HEK293 (cell line): ENCODE measurements at regions of chr10 and their contacts with region 1.

Region 1: DNA sequence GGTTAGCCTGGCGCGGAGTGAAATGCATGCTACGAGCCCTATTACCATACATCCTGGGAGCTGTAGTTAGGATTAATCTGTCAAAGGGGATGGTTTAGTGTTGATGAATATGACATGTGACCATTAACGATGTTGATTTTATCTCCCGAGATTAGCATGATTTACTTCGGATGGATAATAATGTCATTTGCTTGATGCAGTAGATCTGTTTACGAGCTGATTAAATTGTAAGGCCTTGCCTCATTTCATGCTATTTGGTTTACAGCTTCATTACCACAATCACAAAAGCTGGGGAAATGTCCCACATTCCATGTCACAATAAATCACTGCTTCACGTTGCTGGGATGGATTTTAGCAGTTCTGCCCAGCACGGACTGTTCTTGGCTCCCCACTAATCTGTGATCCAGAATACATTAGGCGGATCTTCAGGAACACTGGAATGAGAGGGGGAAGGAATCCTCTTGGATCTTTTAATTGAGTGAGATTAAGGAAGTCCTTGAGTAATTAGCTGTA is 22.3 kb downstream of the ZNF503 start:
- H3K4me3 ChIP-seq: no peak overlapping the region
- H3K27ac ChIP-seq: peak overlapping the region; percentile 59
- H3K4me1 ChIP-seq: peaks cover 11% of the 10 kb centered on the region
- CTCF ChIP-seq: no peak

Region 2: DNA sequence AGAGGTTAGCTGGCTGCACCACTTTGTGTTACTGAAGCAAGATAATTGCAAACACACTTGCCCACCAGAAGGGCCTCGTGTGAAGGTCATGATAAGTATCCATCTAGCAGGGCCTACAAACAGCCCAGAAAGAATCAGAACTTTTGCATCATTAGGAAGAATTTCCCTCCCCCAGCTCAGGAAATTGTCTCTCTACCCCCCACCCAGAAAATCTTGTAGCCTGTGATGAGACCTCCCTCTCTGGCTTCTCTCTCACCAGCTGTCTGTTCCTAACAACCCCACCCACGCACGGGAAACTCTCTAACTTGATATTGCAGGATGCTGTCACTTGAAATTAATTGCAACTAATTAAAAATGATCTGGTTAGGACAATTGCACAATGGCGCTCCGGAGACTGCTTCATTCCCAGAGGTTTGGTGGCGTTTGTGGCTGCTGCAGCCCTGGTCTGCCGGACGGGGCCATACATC is 12.2 kb before region 1 on chr10:
- CTCF ChIA-PET with region 1: no interaction called
- POLR2A ChIA-PET with region 1: no interaction called
- H3K4me3 ChIP-seq: no peak overlapping the region
- H3K27ac ChIP-seq: no peak overlapping the region; the same call in 1 of the 2 replicates
- H3K4me1 ChIP-seq: no peaks in the 10 kb centered on the region
- CTCF ChIP-seq: no peak

Region 3: DNA sequence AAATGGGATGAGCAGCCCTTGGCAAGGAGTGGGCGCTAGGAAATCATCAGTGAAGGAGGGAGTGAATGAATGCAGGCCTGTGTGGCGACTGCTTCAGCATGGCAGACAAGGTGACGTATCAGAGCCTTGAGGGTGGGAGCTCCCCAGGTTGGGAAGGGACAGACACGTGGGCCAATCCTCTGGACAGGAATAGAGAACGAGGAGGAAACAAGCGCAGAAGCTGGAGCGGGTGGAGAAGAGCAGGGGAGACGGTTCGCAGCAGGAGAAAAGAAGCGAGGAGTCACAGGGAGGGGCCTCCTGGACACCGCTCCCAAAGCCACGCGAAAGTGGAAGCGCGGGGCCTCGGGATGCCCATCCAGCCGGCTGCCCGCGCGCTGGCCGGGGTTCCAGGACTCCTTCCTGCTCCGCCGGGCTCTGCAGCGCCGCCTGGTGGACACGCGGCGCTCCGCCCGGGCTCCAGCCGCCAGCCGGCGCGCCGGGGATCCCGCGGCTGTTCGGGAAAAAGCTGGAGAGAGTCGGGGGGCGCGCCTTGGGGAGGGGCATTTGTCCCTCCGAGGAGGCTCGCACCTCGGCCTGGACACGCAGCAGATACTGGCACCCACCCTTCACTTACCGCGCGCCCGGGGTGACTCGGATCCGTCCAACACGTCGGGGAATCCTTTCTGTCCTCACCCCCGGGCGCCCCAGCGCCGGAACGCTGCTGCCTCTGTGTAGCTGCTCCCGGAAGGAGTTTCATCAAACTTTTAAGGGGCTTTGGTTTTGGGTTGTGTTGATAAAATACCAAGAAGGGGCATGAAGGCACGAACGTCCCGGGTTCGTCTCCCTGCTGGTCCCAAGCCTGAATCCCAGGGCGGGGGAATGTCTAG is 16.0 kb after region 1 on chr10:
- CTCF ChIA-PET with region 1: interaction called, 11 read pairs
- POLR2A ChIA-PET with region 1: interaction called, 3 read pairs
- H3K4me3 ChIP-seq: peak overlapping the region; percentile 9; the same call in 1 of the 2 replicates
- H3K27ac ChIP-seq: peak overlapping the region; percentile 68
- H3K4me1 ChIP-seq: no peaks in the 10 kb centered on the region; the same call in 1 of the 2 replicates
- CTCF ChIP-seq: no peak

Region 4: GRCh38 chr10:75525646-75526045 is 146.4 kb after region 1 on chr10:
- CTCF ChIA-PET with region 1: no interaction called
- POLR2A ChIA-PET with region 1: no interaction called
- H3K4me3 ChIP-seq: no peak overlapping the region
- H3K27ac ChIP-seq: no peak overlapping the region
- H3K4me1 ChIP-seq: no peaks in the 10 kb centered on the region
- CTCF ChIP-seq: no peak

Region 5: GRCh38 chr10:75718991-75719390 is 339.7 kb after region 1 on chr10:
- CTCF ChIA-PET with region 1: no interaction called
- POLR2A ChIA-PET with region 1: no interaction called
- H3K4me3 ChIP-seq: no peak overlapping the region
- H3K27ac ChIP-seq: no peak overlapping the region
- H3K4me1 ChIP-seq: no peaks in the 10 kb centered on the region
- CTCF ChIP-seq: no peak

Region 6: GRCh38 chr10:75803816-75804552 is 424.7 kb after region 1 on chr10:
- CTCF ChIA-PET with region 1: no interaction called
- POLR2A ChIA-PET with region 1: no interaction called
- H3K4me3 ChIP-seq: no peak overlapping the region
- H3K27ac ChIP-seq: no peak overlapping the region
- H3K4me1 ChIP-seq: no peaks in the 10 kb centered on the region
- CTCF ChIP-seq: no peak